CD8-positive, alpha-beta T cell (primary cell): ENCODE measurements at regions of chr12 and their contacts with region 1.

Region 1: GRCh38 chr12:108562348-108563135 is at the start of gene ISCU:
- DNase-seq: peak; percentile 97 to 100 (median 99)
- ATAC-seq: peak; percentile 70
- H3K4me3 ChIP-seq: peak within 1 kb of the TSS; percentile 90 to 96
- H3K4me3 Mint-ChIP-seq: peak within 1 kb of the TSS; percentile 100
- H3K27ac ChIP-seq: peak within 1 kb of the TSS; percentile 92 to 94
- H3K27ac Mint-ChIP-seq: peak within 1 kb of the TSS; percentile 100
- H3K4me1 ChIP-seq: peaks cover 44% of the 10 kb centered on the region
- H3K4me1 Mint-ChIP-seq: peaks cover 55% of the 10 kb centered on the region
- H3K27me3 ChIP-seq: no peaks in the 10 kb centered on the region
- H3K27me3 Mint-ChIP-seq: no peaks in the 10 kb centered on the region
- CTCF ChIP-seq: no peak
- total RNA-seq, gene ISCU: 254 to 260 TPM

Region 2: DNA sequence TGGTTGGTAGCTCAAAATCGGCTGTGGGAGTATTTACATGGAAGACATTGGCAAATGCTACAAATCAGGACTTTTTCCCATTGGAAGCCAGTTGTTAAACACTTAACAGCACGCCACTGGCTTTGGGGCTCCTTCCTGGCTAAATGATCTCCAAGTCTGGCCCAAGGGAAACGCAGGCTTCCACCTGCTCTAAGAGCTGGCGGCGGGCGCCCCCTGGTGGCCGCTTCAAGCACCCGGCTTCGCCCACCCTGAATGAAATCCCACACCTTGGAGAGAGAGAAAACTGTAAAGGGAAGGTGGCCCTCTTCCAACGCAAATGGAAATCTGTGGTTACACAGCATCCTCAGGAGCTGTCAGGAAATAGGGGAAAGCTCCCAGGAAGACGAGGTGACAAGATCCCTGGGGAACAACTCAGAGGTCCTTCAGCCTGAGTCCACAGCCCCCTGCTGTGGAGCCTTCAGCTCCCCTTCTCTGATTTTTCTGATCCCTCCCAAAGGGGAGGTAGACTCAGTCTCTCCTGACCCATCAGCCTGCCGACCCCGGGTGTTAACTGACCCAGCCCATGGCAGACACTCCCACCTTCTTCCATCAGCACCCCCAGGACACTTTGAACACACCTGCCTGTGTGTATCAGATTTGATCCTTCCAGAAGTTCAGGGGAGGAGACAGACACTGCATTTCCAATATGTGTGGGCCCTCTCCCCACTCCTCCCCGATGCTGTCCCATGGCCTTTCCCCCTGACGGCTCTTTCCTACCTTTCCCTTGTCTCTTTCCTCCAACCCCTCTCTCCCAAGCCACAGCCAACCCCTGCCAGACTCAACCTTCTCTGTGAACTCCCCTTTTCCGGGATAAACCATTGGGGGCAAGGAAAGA is 55.8 kb after region 1 on chr12:
- CTCF ChIA-PET with region 1: interaction called, 353 read pairs
- POLR2A ChIA-PET with region 1: interaction called, 105 read pairs
- intact Hi-C with region 1: loop called (anchors 1 kb)
- DNase-seq: peak; percentile 53 to 87 (median 78)
- ATAC-seq: peak; percentile 35
- H3K4me3 ChIP-seq: no peak overlapping the region
- H3K4me3 Mint-ChIP-seq: no peak overlapping the region
- H3K27ac ChIP-seq: peak overlapping the region in 1 of 2 experiments; percentile 71
- H3K27ac Mint-ChIP-seq: peak overlapping the region; percentile 95
- H3K4me1 ChIP-seq: peaks cover 45% of the 10 kb centered on the region
- H3K4me1 Mint-ChIP-seq: peaks cover 61% of the 10 kb centered on the region
- H3K27me3 ChIP-seq: no peaks in the 10 kb centered on the region
- H3K27me3 Mint-ChIP-seq: no peaks in the 10 kb centered on the region
- CTCF ChIP-seq: peak; percentile 96

Region 3: DNA sequence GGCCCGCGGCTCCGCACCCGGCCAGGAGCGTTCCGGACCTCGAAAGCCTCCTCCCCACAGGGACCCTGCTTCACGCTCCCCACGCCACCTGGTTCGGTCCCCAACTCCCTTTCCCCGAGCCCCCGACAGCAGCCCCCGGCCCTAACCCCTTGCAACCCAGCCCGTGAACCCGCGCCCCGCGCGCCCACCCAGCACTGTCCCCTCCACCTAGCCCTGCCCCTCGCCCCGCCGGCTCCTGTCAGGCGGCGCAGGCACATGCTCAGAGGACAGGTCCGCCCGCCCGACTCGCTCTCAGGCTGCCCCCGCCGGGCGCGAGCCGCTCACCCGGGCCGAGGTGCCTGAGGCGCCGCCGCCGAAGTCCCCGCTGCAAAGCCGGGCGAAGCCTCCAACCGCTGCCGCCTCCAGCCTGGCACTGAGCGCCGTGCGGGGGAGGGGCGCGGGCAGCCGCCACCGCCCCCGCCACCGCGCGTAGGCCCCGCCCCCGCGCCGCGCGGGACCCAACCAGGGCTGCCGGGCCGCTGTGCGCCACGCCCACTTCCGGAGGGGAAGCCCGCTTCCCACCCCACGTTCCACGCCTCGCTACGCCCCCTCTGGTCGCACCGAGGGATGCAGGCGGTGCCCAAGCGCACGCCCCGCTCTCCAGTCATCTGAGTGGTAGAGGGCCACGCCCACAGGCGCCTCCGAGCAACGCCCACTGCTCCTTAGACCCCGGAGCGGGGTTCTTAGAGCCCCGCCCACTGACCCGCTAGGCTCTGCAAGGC is 168.7 kb after region 1 on chr12 and contains the start of gene CORO1C:
- CTCF ChIA-PET with region 1: interaction called, 3 read pairs
- POLR2A ChIA-PET with region 1: no interaction called
- intact Hi-C with region 1: loop called (anchors 1 kb)
- DNase-seq: peak; percentile 86 to 97 (median 92)
- ATAC-seq: peak; percentile 75
- H3K4me3 ChIP-seq: peak within 1 kb of the TSS; percentile 91 to 93
- H3K4me3 Mint-ChIP-seq: peak within 1 kb of the TSS; percentile 94
- H3K27ac ChIP-seq: peak within 1 kb of the TSS; percentile 67 to 85
- H3K27ac Mint-ChIP-seq: peak within 1 kb of the TSS; percentile 86
- H3K4me1 ChIP-seq: peaks cover 7% of the 10 kb centered on the region
- H3K4me1 Mint-ChIP-seq: peaks cover 26% of the 10 kb centered on the region
- H3K27me3 ChIP-seq: no peaks in the 10 kb centered on the region
- H3K27me3 Mint-ChIP-seq: no peaks in the 10 kb centered on the region
- CTCF ChIP-seq: peak; percentile 74
- total RNA-seq, gene CORO1C: 10.3 to 15.4 TPM

Region 4: GRCh38 chr12:108950991-108951739 is 388.6 kb after region 1 on chr12:
- CTCF ChIA-PET with region 1: interaction called, 4 read pairs
- POLR2A ChIA-PET with region 1: no interaction called
- intact Hi-C with region 1: loop called in 1 of 2 experiments (anchors 5 kb)
- DNase-seq: peak; percentile 43 to 83 (median 69)
- ATAC-seq: peak; percentile 91
- H3K4me3 ChIP-seq: no peak overlapping the region
- H3K4me3 Mint-ChIP-seq: no peak overlapping the region
- H3K27ac ChIP-seq: no peak overlapping the region
- H3K27ac Mint-ChIP-seq: no peak overlapping the region
- H3K4me1 ChIP-seq: no peaks in the 10 kb centered on the region
- H3K4me1 Mint-ChIP-seq: peaks cover 6% of the 10 kb centered on the region
- H3K27me3 ChIP-seq: no peaks in the 10 kb centered on the region
- H3K27me3 Mint-ChIP-seq: peaks cover 16% of the 10 kb centered on the region
- CTCF ChIP-seq: peak; percentile 86

Region 5: DNA sequence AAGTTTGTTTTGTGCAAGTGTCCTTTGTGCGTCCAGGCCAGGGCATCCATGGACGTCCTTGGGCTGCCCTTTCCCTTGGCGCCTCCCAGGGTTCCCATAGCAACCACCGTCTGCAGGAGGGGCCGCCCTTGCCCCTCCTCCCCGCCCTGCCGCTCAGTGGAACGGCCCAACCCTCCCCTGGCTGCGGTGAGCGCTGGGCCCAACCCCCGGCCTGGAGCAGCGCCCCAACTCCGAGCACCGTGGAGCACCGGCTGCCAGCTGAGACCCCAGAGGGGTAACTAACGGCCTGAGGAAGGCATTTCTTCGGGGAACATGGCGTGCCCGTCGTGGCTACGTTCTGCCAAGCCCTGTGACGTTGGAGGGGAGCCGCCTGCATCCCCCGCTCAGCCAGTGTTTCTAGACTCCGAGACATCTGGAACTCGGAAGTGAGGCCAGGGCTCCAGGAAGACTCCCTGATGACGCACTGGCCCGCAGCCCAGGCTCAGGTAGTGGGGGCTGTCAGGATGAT is 548.5 kb after region 1 on chr12:
- CTCF ChIA-PET with region 1: no interaction called
- POLR2A ChIA-PET with region 1: no interaction called
- intact Hi-C with region 1: loop called in 1 of 2 experiments (anchors 5 kb)
- DNase-seq: peak; percentile 11 to 74 (median 55)
- ATAC-seq: peak; percentile 75
- H3K4me3 ChIP-seq: peak overlapping the region; percentile 57 to 71
- H3K4me3 Mint-ChIP-seq: peak overlapping the region; percentile 83
- H3K27ac ChIP-seq: peak overlapping the region; percentile 64 to 73
- H3K27ac Mint-ChIP-seq: peak overlapping the region; percentile 85
- H3K4me1 ChIP-seq: peaks cover 7% of the 10 kb centered on the region
- H3K4me1 Mint-ChIP-seq: peaks cover 36% of the 10 kb centered on the region
- H3K27me3 ChIP-seq: no peaks in the 10 kb centered on the region
- H3K27me3 Mint-ChIP-seq: no peaks in the 10 kb centered on the region
- CTCF ChIP-seq: no peak

Region 6: GRCh38 chr12:109995686-109996482 is 1433.3 kb after region 1 on chr12 and contains the start of gene GIT2:
- CTCF ChIA-PET with region 1: no interaction called
- POLR2A ChIA-PET with region 1: no interaction called
- intact Hi-C with region 1: loop called in 1 of 2 experiments (anchors 5 kb)
- DNase-seq: peak; percentile 87 to 98 (median 94)
- ATAC-seq: peak; percentile 76
- H3K4me3 ChIP-seq: peak within 1 kb of the TSS; percentile 79 to 89
- H3K4me3 Mint-ChIP-seq: peak within 1 kb of the TSS; percentile 97
- H3K27ac ChIP-seq: peak within 1 kb of the TSS; percentile 70 to 85
- H3K27ac Mint-ChIP-seq: peak within 1 kb of the TSS; percentile 89
- H3K4me1 ChIP-seq: peaks cover 34% of the 10 kb centered on the region
- H3K4me1 Mint-ChIP-seq: peaks cover 71% of the 10 kb centered on the region
- H3K27me3 ChIP-seq: no peaks in the 10 kb centered on the region
- H3K27me3 Mint-ChIP-seq: no peaks in the 10 kb centered on the region
- CTCF ChIP-seq: no peak
- total RNA-seq, gene GIT2: 47.6 to 57.9 TPM